ENCODE measurements at regions of chr4 and their contacts with region 1.

Region 1: GRCh38 chr4:173301518-173302201 is 32.5 kb downstream of the HMGB2 start:
- DNase-seq: no peak
- ATAC-seq: no peak
- H3K4me3 Mint-ChIP-seq: no peak overlapping the region
- H3K27ac Mint-ChIP-seq: no peak overlapping the region
- H3K4me1 Mint-ChIP-seq: peaks cover 10% of the 10 kb centered on the region
- H3K27me3 Mint-ChIP-seq: no peaks in the 10 kb centered on the region
- CTCF ChIP-seq: peak; percentile 64

Region 2: GRCh38 chr4:173025131-173025530 is 276.5 kb before region 1 on chr4:
- CTCF ChIA-PET with region 1: interaction called, 23 read pairs
- POLR2A ChIA-PET with region 1: no interaction called
- DNase-seq: peak; percentile 55
- ATAC-seq: peak; percentile 88
- H3K4me3 Mint-ChIP-seq: no peak overlapping the region
- H3K27ac Mint-ChIP-seq: no peak overlapping the region
- H3K4me1 Mint-ChIP-seq: peaks cover 47% of the 10 kb centered on the region
- H3K27me3 Mint-ChIP-seq: no peaks in the 10 kb centered on the region
- CTCF ChIP-seq: peak; percentile 67

Region 3: GRCh38 chr4:173257732-173258717 is 43.6 kb before region 1 on chr4:
- CTCF ChIA-PET with region 1: interaction called, 24 read pairs
- POLR2A ChIA-PET with region 1: no interaction called
- DNase-seq: peak; percentile 77
- ATAC-seq: peak; percentile 96
- H3K4me3 Mint-ChIP-seq: no peak overlapping the region; the same call in 1 of the 2 replicates
- H3K27ac Mint-ChIP-seq: peak overlapping the region; percentile 77
- H3K4me1 Mint-ChIP-seq: peaks cover 48% of the 10 kb centered on the region
- H3K27me3 Mint-ChIP-seq: no peaks in the 10 kb centered on the region
- CTCF ChIP-seq: peak; percentile 51

Region 4: DNA sequence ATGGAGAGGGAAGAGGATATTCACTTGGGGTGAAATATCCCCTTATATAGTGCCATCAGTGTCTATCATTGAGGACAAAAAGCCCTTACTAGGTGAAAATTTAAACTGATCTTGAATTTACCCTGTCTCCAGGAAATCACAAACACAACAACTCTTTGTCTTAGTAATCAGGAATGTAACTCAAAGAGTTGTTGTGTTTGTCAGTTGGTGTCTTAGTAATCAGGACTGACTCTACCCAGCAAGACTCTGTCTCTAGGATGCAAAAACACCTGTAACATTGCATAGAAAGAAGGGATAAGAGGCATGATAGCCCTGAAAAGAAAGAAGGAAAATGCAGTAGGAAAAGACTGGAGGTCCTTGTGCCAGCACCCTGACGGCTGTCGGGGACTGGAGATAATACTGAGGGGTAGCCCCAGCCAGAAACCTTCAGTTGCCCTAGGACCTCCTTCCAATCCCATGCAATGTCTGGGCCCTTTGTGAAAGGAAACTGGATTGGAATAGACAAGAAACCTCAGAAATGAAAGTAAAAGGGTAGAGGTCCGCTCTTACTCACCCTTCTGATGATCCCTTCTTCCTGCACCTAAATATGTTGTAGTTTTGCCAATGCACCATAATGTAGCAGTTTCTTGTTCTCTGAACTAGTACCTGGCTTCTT is 12.8 kb before region 1 on chr4:
- CTCF ChIA-PET with region 1: interaction called, 57 read pairs
- POLR2A ChIA-PET with region 1: no interaction called
- DNase-seq: no peak
- ATAC-seq: no peak
- H3K4me3 Mint-ChIP-seq: no peak overlapping the region
- H3K27ac Mint-ChIP-seq: no peak overlapping the region
- H3K4me1 Mint-ChIP-seq: peaks cover 2% of the 10 kb centered on the region; the same call in 1 of the 2 replicates
- H3K27me3 Mint-ChIP-seq: no peaks in the 10 kb centered on the region; the same call in 1 of the 2 replicates
- CTCF ChIP-seq: no peak

Region 5: DNA sequence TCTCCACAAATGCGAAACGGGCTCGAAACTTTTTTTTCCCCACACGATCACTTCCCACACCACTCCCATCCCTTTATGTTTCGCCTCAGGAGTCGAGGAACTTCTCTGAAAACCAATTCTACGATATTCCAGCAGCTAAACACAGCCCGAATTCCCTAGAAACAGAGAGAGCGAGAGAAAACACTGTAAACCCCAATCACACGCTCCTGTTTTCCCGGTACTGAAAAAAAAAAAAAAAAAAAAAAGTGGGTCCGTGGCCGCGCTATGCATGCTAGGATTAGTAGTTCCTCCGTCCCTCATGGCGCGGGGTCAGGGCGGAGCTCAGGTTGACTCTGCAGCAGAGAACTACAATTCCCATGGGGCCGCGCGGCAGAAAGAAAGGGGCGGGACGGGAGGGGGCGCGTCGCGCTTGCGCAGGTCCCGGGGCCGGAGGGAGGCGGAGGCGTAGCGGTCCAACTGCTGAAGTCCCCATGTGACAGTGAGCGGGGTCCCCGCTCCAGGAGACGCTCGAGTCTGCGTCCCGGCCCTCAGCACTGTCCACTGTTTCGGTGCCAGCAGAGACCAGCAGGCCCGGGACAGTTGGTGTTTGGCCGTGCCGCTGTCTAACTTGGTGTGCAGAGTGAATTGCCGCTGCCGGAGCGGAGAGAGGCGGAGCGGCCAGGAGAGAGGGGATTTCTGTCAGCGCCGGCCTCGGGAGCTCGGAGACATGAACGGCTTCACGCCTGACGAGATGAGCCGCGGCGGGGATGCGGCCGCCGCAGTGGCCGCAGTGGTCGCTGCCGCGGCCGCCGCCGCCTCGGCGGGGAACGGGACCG is 69.0 kb after region 1 on chr4 and contains the start of gene SAP30:
- CTCF ChIA-PET with region 1: interaction called, 16 read pairs
- POLR2A ChIA-PET with region 1: interaction called, 3 read pairs
- DNase-seq: peak; percentile 98
- ATAC-seq: peak; percentile 86
- H3K4me3 Mint-ChIP-seq: peak within 1 kb of the TSS; percentile 100
- H3K27ac Mint-ChIP-seq: peak within 1 kb of the TSS; percentile 100
- H3K4me1 Mint-ChIP-seq: peaks cover 22% of the 10 kb centered on the region
- H3K27me3 Mint-ChIP-seq: peaks cover 7% of the 10 kb centered on the region
- CTCF ChIP-seq: no peak
- total RNA-seq, gene SAP30: 20.0 to 21.1 TPM (median 20.0 TPM) in 3 replicates

Region 6: DNA sequence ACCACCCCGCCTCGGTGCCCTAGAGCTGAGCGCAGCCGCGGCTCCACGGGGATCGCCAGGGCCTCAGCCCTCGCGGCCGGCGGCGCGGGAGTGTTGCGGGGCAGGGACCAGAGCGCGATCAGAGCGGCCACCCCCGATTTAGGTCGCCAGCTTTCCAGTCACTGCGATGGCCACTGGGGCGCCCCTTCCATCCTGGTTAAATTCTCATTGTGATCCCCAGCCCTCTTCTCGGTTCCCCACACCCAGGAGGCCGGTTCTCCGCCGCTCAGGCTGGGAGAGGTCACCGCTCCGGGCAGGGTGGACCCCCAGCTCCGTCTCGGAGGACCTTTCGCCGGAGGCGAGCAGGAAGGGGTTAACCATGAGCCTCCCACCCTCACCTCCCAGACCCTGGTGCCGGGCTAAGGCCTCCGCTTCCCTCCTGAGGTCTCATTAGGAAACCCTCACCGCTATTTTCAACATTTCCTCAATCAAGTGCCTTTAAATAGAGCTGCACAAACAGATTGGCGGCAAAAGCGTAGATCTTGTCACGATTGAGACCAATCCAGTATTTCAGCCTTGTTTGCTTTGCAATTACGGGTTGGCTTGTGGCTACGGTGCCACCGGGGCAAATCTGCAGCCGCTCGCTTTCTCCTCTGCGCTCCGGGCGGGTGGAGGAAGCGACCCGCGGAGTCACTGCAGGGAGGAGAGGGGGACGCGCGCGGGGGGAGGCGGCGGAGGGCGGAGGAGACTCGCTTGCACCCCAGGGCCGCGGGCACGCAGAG is 236.7 kb after region 1 on chr4:
- CTCF ChIA-PET with region 1: no interaction called
- POLR2A ChIA-PET with region 1: no interaction called
- DNase-seq: peak; percentile 49
- ATAC-seq: peak; percentile 49
- H3K4me3 Mint-ChIP-seq: peak overlapping the region; percentile 71
- H3K27ac Mint-ChIP-seq: no peak overlapping the region
- H3K4me1 Mint-ChIP-seq: peaks cover 18% of the 10 kb centered on the region
- H3K27me3 Mint-ChIP-seq: peaks cover 99% of the 10 kb centered on the region
- CTCF ChIP-seq: no peak

Measured in WTC11 (cell line).